GM12878 (cell line): ENCODE measurements at regions of chr11 and their contacts with region 1.

Region 1: GRCh38 chr11:73965076-73965860 is 14.4 kb downstream of the DNAJB13 start:
- DNase-seq: no peak
- ATAC-seq: no peak
- H3K4me3 ChIP-seq: no peak overlapping the region
- H3K27ac ChIP-seq: no peak overlapping the region
- H3K4me1 ChIP-seq: no peaks in the 10 kb centered on the region
- H3K27me3 ChIP-seq: no peaks in the 10 kb centered on the region
- CTCF ChIP-seq: no peak
- EP300 ChIP-seq: no peak
- POLR2A ChIP-seq: no peak
- RAD21 ChIP-seq: no peak

Region 2: DNA sequence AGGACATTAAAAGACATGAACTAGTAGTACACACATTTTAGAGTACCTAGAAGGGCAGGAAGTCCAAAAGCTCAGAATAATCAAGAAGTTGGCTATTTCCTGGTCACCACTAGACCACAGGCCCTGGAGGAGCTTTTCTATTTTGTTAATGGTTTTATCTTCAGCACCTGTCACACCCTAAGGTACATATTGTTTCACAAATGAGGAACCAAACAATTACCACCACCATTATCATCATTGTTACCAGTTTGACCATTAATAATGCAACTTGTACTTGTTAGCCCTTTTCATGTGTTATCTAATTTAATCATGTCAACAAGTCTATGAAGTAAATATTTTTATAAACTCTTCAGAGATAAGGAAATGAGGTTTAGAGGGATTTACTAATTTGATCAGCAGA is 172.7 kb before region 1 on chr11:
- CTCF ChIA-PET with region 1: no interaction called
- POLR2A ChIA-PET with region 1: no interaction called
- RAD21 ChIA-PET with region 1: no interaction called
- SMC1A ChIA-PET with region 1: no interaction called
- in situ Hi-C with region 1: no loop called
- intact Hi-C with region 1: no loop called
- DNase-seq: no peak
- ATAC-seq: no peak
- H3K4me3 ChIP-seq: no peak overlapping the region
- H3K27ac ChIP-seq: no peak overlapping the region
- H3K4me1 ChIP-seq: peaks cover 3% of the 10 kb centered on the region; the same call in 1 of the 2 replicates
- H3K27me3 ChIP-seq: no peaks in the 10 kb centered on the region
- CTCF ChIP-seq: no peak
- EP300 ChIP-seq: no peak
- POLR2A ChIP-seq: no peak
- RAD21 ChIP-seq: no peak

Region 3: DNA sequence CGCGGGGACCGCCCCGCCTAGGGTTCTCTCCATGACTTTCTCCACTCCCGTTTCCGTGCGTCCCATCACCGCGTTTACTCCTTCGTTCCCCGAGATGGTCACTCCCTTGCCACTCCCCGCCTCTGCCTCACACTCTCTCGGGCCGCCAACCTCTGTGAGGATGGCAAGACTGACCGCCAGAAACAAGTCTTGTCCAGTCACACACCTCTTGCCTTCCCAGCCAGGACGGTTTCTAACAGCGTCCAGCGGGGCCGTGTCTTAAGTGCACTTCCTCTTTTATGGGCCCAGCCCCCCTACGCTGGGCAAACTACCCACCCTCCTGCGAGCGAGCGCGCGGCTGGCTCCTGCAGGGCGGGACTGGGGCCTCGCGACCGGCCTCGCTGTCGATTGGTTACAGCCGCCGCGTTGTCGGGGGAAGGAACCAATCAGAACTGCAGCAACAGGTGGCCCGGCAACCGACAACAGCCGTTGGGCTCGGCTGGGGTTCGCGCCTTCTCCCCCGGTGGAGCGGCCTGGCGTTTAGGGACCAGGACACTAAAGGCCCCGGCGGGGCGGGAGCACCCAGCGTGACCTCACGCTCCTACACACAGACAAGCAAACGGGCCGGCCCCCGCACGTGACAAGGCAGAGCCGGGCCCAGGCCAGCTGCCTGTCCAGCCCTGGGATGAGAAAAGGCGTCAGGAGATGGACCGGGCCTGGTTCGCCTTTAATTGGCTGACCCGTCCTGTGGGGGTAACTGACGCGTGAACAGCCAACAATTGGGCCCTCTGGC is 17.9 kb after region 1 on chr11:
- CTCF ChIA-PET with region 1: interaction called, 48 read pairs
- POLR2A ChIA-PET with region 1: interaction called, 16 read pairs
- RAD21 ChIA-PET with region 1: interaction called, 24 read pairs
- SMC1A ChIA-PET with region 1: interaction called, 23 read pairs
- in situ Hi-C with region 1: no loop called
- intact Hi-C with region 1: no loop called
- DNase-seq: peak; percentile 89
- ATAC-seq: peak; percentile 85
- H3K4me3 ChIP-seq: peak overlapping the region; percentile 79
- H3K27ac ChIP-seq: peak overlapping the region; percentile 85
- H3K4me1 ChIP-seq: peaks cover 29% of the 10 kb centered on the region
- H3K27me3 ChIP-seq: no peaks in the 10 kb centered on the region
- CTCF ChIP-seq: no peak
- EP300 ChIP-seq: peak in 1 of 2 experiments; percentile 4; a peak in 1 of 4 replicates
- POLR2A ChIP-seq: peak; percentile 97
- RAD21 ChIP-seq: no peak

Region 4: GRCh38 chr11:74030723-74031676 is 65.7 kb after region 1 on chr11:
- CTCF ChIA-PET with region 1: interaction called, 6 read pairs
- POLR2A ChIA-PET with region 1: no interaction called
- RAD21 ChIA-PET with region 1: interaction called, 5 read pairs
- SMC1A ChIA-PET with region 1: interaction called, 3 read pairs
- in situ Hi-C with region 1: no loop called
- intact Hi-C with region 1: loop called (anchors 5 kb)
- DNase-seq: no peak
- ATAC-seq: peak; percentile 69
- H3K4me3 ChIP-seq: no peak overlapping the region
- H3K27ac ChIP-seq: 0 out of 2 replicates have a peak overlapping the region, but pooled peaks have one; percentile 0
- H3K4me1 ChIP-seq: peaks cover 9% of the 10 kb centered on the region
- H3K27me3 ChIP-seq: no peaks in the 10 kb centered on the region
- CTCF ChIP-seq: no peak
- EP300 ChIP-seq: no peak
- POLR2A ChIP-seq: no peak
- RAD21 ChIP-seq: no peak

Region 5: DNA sequence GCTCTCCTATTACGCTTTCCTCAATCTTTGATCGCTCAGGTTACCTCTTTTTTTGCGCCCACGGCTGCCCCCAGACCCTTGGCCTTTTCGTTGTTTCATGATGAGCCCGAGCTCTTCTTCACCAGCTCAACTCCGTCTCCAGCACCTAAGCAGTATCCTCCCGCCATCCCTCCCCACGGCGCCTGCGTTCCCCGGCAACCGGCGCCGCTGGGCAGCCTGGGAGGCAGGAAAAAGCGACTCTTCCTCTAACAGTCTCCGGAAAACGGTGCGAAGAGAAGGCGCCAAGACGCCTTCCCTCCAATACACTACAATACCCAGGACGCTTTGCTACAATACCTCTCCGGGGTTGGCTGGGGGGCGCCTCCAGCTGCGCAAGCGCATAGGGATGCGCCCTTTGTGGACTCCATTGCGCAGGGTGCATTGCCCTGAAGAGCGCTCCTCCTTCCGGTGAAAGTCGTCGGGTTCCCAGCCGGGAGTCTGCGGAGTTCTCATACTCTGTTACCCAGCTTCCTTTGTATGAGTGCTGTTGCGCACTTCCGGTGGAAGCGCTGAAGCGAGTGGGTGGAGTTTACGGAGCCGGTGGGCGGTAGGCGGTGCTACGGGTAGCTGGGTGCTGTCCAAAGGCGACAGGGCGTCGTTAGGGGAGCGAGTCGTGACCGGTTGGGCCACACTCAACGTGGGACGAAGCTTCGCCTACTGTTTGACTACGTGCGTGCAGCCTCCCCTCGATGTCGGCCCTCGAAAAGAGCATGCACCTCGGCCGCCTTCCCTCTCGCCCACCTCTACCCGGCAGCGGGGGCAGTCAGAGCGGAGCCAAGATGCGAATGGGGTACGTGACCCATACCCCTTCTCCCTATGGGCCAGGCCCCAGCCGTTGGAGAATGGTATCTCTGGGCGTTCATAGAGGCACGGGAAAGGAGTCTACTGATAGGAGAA is 205.7 kb after region 1 on chr11 and contains the starts of genes C2CD3 and PPME1:
- CTCF ChIA-PET with region 1: interaction called, 8 read pairs
- POLR2A ChIA-PET with region 1: interaction called, 3 read pairs
- RAD21 ChIA-PET with region 1: interaction called, 8 read pairs
- SMC1A ChIA-PET with region 1: interaction called, 4 read pairs
- in situ Hi-C with region 1: no loop called
- intact Hi-C with region 1: loop called (anchors 5 kb)
- DNase-seq: peak; percentile 100
- ATAC-seq: peak; percentile 96
- H3K4me3 ChIP-seq: peak within 1 kb of the TSS; percentile 95
- H3K27ac ChIP-seq: peak within 1 kb of the TSS; percentile 69
- H3K4me1 ChIP-seq: peaks cover 3% of the 10 kb centered on the region; the same call in 1 of the 2 replicates
- H3K27me3 ChIP-seq: no peaks in the 10 kb centered on the region
- CTCF ChIP-seq: peak; percentile 11 to 36 (median 11); a peak in 2 of 6 replicates
- EP300 ChIP-seq: 0 out of 4 replicates have a peak, but pooled peaks of 1 of the 2 experiments have one; percentile 16
- POLR2A ChIP-seq: peak; percentile 99
- RAD21 ChIP-seq: 0 out of 2 replicates have a peak, but pooled peaks have one; percentile 1
- polyA plus RNA-seq, gene C2CD3: 2.3 to 2.7 TPM
- polyA plus RNA-seq, gene PPME1: 3.1 to 3.3 TPM

Region 6: DNA sequence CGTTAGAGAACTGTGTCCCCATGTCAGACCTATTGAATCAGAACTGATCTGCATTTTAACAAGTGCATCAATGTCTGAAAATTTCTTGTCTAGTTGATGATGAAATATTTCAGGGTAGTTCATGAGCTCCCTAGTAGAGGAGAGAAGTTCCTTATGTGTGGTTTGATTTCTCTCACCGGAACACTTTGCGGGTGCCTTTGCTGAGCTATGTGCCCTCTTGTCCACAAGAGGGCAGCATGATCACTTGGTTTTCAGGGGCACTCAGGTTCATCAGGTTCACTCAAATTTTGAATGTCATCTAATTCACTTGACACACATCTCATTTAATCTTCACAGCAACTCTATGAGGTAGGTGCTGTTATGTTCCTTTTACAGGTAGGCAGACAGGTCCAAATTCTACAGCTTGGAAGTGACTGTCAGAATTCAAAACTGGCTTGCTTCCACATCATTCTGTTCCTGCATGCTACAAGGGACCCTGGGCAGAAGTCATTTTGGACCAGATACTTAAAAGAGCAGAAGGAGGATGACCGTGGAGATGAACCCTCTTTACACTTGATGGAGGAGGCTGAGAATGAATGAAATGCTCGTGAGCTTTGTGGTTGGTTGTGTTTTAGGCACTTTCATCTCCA is 290.6 kb after region 1 on chr11:
- CTCF ChIA-PET with region 1: interaction called, 14 read pairs
- POLR2A ChIA-PET with region 1: no interaction called
- RAD21 ChIA-PET with region 1: interaction called, 10 read pairs
- SMC1A ChIA-PET with region 1: interaction called, 11 read pairs
- in situ Hi-C with region 1: no loop called
- intact Hi-C with region 1: no loop called
- DNase-seq: no peak
- ATAC-seq: peak; percentile 80
- H3K4me3 ChIP-seq: no peak overlapping the region
- H3K27ac ChIP-seq: no peak overlapping the region
- H3K4me1 ChIP-seq: no peaks in the 10 kb centered on the region
- H3K27me3 ChIP-seq: no peaks in the 10 kb centered on the region
- CTCF ChIP-seq: peak; percentile 87 to 95 (median 89)
- EP300 ChIP-seq: no peak
- POLR2A ChIP-seq: no peak
- RAD21 ChIP-seq: peak; percentile 71